ENCODE measurements at regions of chr18 and their contacts with region 1.

Region 1: GRCh38 chr18:11851146-11851805 is at the start of gene CHMP1B:
- DNase-seq: peak; percentile 97
- ATAC-seq: peak; percentile 84
- H3K4me3 ChIP-seq: peak within 1 kb of the TSS; percentile 91
- H3K27ac ChIP-seq: peak within 1 kb of the TSS; percentile 96
- H3K4me1 ChIP-seq: peaks cover 35% of the 10 kb centered on the region
- H3K27me3 ChIP-seq: no peaks in the 10 kb centered on the region
- CTCF ChIP-seq: no peak
- total RNA-seq, gene CHMP1B: 81.9 and 89.5 TPM in 2 replicates

Region 2: GRCh38 chr18:11324956-11325873 is 526.1 kb before region 1 on chr18:
- CTCF ChIA-PET with region 1: no interaction called
- POLR2A ChIA-PET with region 1: no interaction called
- intact Hi-C with region 1: no loop called
- DNase-seq: peak; percentile 61
- ATAC-seq: peak; percentile 48
- H3K4me3 ChIP-seq: no peak overlapping the region
- H3K27ac ChIP-seq: peak overlapping the region; percentile 56
- H3K4me1 ChIP-seq: peaks cover 21% of the 10 kb centered on the region
- H3K27me3 ChIP-seq: no peaks in the 10 kb centered on the region
- CTCF ChIP-seq: no peak

Region 3: DNA sequence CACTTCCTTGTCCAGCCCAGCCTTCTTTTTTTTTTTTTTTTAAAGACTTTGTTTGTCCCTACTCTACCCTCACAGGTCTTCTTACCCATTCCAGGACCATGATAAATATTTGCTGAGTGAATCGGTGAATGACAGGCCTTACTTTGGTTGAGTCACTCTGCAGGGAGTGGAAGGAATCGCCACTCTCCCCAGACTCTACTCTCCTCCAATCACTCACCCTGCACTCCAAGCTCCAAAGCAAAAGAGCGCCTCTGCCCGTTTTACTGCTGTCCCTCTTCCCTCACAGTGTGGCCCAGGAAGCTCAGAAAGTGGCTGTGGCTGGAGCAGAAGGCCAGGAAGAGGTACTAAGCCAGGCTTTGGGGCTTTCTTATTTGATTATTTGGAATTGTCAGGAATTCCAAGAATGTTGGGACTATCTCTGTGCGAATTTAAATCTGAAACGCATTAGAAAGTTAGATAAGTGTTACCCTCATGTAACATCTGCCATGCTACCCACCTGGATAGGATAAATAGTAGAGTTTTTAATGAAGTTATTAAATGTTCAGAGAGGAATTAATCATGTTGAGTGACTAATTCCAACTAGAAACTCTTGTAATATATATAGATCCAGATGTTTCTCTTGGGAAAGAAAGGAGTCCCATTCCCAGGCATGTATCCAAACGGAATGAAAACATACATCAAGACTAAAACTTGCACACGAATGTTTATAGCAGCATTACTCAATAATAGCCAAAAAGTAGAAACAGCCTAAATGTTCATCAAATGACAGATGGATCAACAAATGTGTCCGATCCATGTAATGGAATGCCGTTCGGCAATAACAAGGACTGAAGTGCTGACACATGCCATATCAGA is 43.0 kb before region 1 on chr18:
- CTCF ChIA-PET with region 1: interaction called, 5 read pairs
- POLR2A ChIA-PET with region 1: no interaction called
- intact Hi-C with region 1: loop called (anchors 2 kb)
- DNase-seq: peak; percentile 96
- ATAC-seq: peak; percentile 100
- H3K4me3 ChIP-seq: peak overlapping the region; percentile 36; the same call in 1 of the 2 replicates
- H3K27ac ChIP-seq: peak overlapping the region; percentile 91
- H3K4me1 ChIP-seq: peaks cover 25% of the 10 kb centered on the region
- H3K27me3 ChIP-seq: no peaks in the 10 kb centered on the region
- CTCF ChIP-seq: 0 out of 2 replicates have a peak, but pooled peaks have one; percentile 18

Region 4: DNA sequence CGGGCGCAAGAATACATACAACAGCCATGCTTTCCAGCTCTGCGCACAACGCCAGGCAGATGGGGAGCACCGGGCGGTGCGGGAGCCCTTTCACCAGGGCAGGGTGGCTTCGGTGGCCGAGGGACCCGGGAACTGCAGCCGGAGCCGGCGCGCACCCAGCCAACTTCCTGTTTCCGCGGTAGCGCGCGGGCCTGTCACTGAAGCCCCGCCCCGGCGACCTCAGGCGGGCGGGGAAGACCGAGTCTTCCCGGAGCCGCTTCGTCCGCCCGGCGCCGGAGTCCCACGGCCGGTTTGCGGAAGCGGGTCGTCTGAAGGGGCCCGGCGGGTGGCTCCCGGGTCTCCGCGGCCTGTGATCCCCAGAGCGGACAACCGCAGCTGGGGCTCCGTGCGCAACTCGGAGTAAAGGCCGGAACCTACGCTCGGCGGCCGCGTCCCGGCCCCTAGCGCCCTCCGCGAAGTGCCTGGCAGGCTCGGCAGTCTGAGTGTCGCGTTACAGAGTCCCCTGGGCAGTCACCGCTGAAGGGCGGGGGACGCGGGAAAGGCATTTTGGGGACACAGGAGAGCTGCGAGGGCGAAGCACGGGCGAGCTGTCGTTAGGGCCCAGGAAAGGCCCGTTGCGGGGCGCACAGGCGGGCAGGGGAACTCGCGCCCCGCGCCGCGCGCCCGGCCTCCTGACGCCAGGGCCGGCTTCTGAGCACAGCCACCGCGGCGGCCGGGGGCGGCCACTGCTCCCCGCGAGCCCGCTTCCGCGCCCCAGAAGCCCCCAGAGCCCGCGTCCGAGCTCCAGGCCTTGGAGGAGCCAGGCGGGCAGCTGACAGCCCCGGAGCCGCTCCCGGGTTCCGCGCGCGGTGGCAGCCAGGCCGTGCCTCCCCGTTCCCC is 57.1 kb after region 1 on chr18 and contains the start of gene MPPE1:
- CTCF ChIA-PET with region 1: no interaction called
- POLR2A ChIA-PET with region 1: no interaction called
- intact Hi-C with region 1: loop called (anchors 2 kb)
- DNase-seq: peak; percentile 86
- ATAC-seq: peak; percentile 87
- H3K4me3 ChIP-seq: peak within 1 kb of the TSS; percentile 91
- H3K27ac ChIP-seq: peak within 1 kb of the TSS; percentile 81
- H3K4me1 ChIP-seq: peaks cover 31% of the 10 kb centered on the region
- H3K27me3 ChIP-seq: no peaks in the 10 kb centered on the region
- CTCF ChIP-seq: no peak
- total RNA-seq, gene MPPE1: 15.8 and 17.9 TPM in 2 replicates